PC-3 (cell line): ENCODE measurements at regions of chr9 and their contacts with region 1.

Region 1: DNA sequence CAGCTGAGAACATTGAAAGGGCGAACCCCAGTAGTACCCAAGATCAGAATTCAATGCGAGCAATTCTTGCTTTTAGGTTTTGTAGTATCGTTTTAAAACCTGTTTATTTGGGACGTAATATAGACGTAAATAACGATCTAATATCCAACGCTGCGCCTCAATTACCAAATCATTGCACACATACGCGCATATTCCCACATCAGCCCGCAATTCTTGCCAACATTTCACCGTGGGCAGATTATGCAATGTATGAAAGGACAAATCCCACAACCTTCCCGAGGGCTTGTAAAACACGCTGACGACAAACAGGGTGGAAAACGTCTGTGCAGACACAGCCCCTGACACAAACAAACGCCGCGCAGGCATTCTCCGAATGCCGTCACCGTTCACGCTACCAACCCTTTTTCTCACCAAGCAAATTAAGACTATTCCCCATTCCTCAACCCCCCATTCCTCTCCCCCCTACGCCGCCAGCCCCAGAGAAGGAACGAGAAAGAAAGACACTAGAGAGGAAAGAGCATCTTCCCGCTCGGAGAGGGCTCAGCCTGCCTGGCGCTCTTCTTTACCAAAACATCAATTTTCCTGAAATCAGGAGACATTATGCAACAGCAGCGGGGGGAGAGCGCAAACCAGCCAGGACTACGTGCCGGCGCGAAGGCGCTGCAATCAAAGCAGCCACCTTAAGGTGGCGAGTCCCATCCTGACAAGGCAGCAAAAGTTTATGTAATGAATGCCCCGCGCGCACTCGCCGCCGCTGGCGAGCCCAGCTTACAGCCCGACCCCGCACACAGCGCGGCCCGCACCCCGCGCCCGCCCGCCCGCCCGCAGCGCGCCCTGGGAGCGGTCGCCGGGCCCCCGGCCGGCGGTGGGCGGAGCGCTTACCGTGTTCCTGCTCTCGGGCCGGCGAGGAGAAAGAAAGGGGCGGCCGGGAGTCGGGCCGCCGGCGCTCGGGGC is 597 bp downstream of the NFIL3 start:
- DNase-seq: peak; percentile 47
- ATAC-seq: peak; percentile 18
- H3K4me3 ChIP-seq: peak overlapping the region; percentile 96
- H3K27ac ChIP-seq: peak overlapping the region; percentile 71
- H3K4me1 ChIP-seq: peaks cover 38% of the 10 kb centered on the region
- H3K27me3 ChIP-seq: no peaks in the 10 kb centered on the region
- CTCF ChIP-seq: no peak

Region 2: GRCh38 chr9:90914868-90915483 is 508.1 kb before region 1 on chr9:
- CTCF ChIA-PET with region 1: interaction called, 17 read pairs
- POLR2A ChIA-PET with region 1: no interaction called
- intact Hi-C with region 1: loop called (anchors 2 kb)
- DNase-seq: peak; percentile 80
- ATAC-seq: peak; percentile 97
- H3K4me3 ChIP-seq: no peak overlapping the region
- H3K27ac ChIP-seq: no peak overlapping the region
- H3K4me1 ChIP-seq: no peaks in the 10 kb centered on the region
- H3K27me3 ChIP-seq: no peaks in the 10 kb centered on the region
- CTCF ChIP-seq: peak; percentile 77

Region 3: GRCh38 chr9:90991953-90992352 is 431.1 kb before region 1 on chr9:
- CTCF ChIA-PET with region 1: no interaction called
- POLR2A ChIA-PET with region 1: no interaction called
- intact Hi-C with region 1: loop called (anchors 2 kb)
- DNase-seq: peak; percentile 58
- ATAC-seq: peak; percentile 72
- H3K4me3 ChIP-seq: 0 out of 2 replicates have a peak overlapping the region, but pooled peaks have one; percentile 2
- H3K27ac ChIP-seq: peak overlapping the region; percentile 98
- H3K4me1 ChIP-seq: peaks cover 20% of the 10 kb centered on the region
- H3K27me3 ChIP-seq: no peaks in the 10 kb centered on the region
- CTCF ChIP-seq: no peak

Region 4: GRCh38 chr9:91089405-91090129 is 333.5 kb before region 1 on chr9:
- CTCF ChIA-PET with region 1: interaction called, 11 read pairs
- POLR2A ChIA-PET with region 1: no interaction called
- intact Hi-C with region 1: loop called (anchors 1 kb)
- DNase-seq: peak; percentile 64
- ATAC-seq: peak; percentile 96
- H3K4me3 ChIP-seq: no peak overlapping the region
- H3K27ac ChIP-seq: 0 out of 2 replicates have a peak overlapping the region, but pooled peaks have one; percentile 6
- H3K4me1 ChIP-seq: no peaks in the 10 kb centered on the region
- H3K27me3 ChIP-seq: no peaks in the 10 kb centered on the region
- CTCF ChIP-seq: peak; percentile 67

Region 5: DNA sequence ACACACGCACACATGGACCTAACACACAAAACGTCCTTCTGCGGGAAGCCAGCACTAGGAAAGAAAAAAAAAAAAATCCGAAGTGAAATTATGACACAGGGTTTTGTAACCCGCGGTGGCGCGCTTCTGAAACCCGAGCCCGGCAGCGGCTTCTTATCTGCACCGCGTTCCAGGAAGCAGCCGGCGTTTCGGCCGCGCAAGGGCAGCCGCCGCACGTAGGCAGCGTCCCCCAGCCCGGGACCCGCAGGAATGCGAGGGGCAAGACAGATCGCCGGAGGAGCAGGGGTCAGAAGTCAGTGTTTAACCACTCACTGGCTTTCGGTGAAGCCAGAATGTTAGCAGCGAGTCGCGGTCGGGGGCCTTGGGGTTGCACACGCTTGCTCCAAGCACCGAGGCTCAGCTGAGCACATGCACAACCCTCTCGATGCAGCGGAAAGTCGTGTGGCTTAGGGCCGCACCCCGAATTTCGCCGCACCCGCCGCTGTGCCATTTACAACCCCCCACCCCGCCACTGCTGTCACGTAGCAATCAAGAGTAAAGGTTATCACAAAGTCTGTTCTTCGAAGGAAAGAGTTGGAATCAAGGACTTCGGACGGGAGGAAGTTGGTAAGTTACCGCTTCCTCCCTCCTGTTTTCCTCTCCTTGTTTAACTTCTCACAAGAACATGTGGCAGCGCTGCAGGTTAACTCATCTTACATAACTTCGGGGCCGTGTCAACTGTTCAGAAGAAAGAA is 229.2 kb before region 1 on chr9:
- CTCF ChIA-PET with region 1: no interaction called
- POLR2A ChIA-PET with region 1: interaction called, 5 read pairs
- intact Hi-C with region 1: loop called (anchors 2 kb)
- DNase-seq: peak; percentile 71
- ATAC-seq: peak; percentile 58
- H3K4me3 ChIP-seq: peak overlapping the region; percentile 67
- H3K27ac ChIP-seq: peak overlapping the region; percentile 100
- H3K4me1 ChIP-seq: peaks cover 49% of the 10 kb centered on the region
- H3K27me3 ChIP-seq: no peaks in the 10 kb centered on the region
- CTCF ChIP-seq: no peak

Region 6: DNA sequence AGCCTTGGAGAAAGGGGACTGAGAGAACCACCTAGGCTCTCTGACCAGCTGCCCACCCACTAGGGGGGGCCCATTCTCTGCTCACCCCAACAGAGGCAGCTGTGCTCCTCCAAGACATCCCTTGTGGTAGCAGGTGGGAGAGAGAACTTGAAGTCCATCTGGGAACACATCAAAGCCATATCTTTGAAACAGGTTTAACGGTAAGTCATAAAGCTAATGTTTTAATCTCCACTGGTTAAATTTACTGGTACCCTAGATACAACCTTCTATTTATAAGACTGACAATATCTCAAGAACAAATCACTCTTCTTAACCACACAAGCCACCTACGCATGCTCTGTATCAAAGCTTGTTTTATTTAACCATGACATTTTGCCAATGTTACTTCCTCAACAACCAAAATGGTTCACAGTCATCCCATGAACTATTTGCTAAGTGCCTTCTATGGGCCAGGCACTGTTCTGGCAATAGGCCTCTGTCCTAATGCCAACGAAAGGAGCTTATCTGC is 81.7 kb before region 1 on chr9:
- CTCF ChIA-PET with region 1: no interaction called
- POLR2A ChIA-PET with region 1: no interaction called
- intact Hi-C with region 1: no loop called
- DNase-seq: no peak
- ATAC-seq: no peak
- H3K4me3 ChIP-seq: no peak overlapping the region
- H3K27ac ChIP-seq: no peak overlapping the region
- H3K4me1 ChIP-seq: peaks cover 16% of the 10 kb centered on the region
- H3K27me3 ChIP-seq: no peaks in the 10 kb centered on the region
- CTCF ChIP-seq: no peak; the same call in 1 of the 2 replicates

Region 7: DNA sequence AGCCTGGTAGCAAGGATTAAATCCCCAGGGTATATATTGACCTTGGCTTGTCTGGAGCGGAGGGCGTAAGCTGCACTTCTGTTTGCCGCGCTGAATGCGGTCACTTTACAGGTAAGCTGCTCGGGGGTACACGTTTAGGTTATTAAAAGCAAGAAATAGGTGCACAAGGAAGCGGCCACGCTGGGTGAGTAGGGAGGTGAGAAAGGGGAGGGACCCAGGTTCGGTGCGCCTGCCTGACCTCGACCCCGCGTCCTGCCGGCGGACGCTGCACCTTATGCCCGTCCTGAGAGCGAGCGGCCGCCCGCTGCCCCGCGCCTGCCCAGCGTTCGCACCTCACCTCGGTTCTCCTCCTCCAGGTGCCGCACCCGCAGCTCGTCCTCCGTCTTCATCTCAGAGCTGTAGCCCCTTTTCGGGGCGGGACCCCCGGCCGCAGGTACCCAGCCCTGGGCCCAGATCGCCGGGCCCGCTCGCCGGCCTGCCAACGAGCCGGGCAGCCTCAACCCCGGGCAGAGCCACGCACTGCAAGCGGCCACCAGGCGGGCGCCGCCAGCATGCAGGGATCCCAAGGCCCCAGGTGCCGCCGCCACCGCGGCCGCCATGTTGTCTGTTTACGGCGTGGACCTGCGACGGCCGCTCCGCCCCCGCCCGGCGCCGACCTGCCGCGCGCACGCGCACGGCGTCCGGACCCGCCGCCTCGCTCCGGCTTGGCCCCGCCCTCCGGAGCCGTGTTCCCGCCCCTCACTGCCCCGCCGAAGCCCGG is 61.6 kb before region 1 on chr9 and contains the start of gene AUH:
- CTCF ChIA-PET with region 1: no interaction called
- POLR2A ChIA-PET with region 1: interaction called, 13 read pairs
- intact Hi-C with region 1: loop called (anchors 5 kb)
- DNase-seq: peak; percentile 71
- ATAC-seq: peak; percentile 94
- H3K4me3 ChIP-seq: peak within 1 kb of the TSS; percentile 85
- H3K27ac ChIP-seq: peak within 1 kb of the TSS; percentile 32; the same call in 1 of the 2 replicates
- H3K4me1 ChIP-seq: peaks cover 13% of the 10 kb centered on the region
- H3K27me3 ChIP-seq: no peaks in the 10 kb centered on the region
- CTCF ChIP-seq: no peak
- total RNA-seq, gene AUH: 30.4 and 32.3 TPM in 2 replicates